SK-N-SH (cell line): ENCODE measurements at regions of chr2 and their contacts with region 1.

Region 1: DNA sequence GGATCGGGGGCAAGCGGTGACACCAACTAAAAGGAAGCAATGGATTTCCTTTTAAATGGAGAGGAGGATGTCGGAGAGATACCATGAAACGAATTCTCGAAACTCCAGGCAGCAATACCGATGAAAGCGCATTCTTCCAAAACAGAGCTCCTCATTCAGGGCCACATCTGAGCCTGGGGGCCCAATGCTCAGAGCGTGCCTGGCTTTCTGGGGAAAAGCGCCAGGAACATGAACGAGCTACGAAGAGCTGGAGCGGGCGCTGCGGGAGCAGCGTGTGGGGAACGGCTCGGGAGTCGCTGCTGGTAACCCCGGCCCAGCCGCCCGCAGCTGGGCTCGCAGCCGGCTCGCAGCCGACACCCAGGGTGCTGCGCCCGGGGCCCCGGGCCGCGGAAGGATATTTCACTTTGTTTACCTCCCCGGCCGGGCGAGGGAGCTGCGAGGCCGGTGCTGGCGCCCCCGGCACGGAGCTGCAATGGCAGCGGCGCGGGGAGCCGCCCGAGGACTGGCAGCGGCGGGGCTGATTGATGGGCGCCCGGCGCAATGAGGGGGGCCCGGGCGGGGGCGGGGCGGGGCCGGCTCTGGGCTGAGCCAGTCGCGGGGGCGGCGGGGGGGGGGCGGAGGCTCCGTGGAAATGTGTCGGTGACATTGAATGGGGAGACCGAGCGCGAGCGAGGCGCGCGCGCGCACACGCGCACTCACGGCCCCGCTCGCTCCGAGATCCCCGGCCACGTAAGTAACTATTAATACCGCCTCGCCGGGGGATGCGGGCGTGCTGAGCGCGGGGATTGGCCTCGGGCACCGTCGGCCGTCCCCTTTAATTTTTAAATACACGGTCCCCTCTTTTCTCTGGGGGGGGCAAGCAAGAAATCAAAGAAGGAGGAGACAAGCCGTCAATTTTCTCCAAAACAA is at the start of gene TRIB2:
- DNase-seq: peak; percentile 98
- H3K4me3 ChIP-seq: peak within 1 kb of the TSS; percentile 93 to 98
- H3K27ac ChIP-seq: peak within 1 kb of the TSS; percentile 92 to 93
- H3K4me1 ChIP-seq: peaks cover 28 to 34% of the 10 kb centered on the region in 2 experiments
- H3K27me3 ChIP-seq: no peaks in the 10 kb centered on the region
- CTCF ChIP-seq: 0 out of 2 replicates have a peak, but pooled peaks have one; percentile 19
- EP300 ChIP-seq: no peak; a peak in 2 of 4 replicates
- RAD21 ChIP-seq: peak; percentile 53
- polyA plus RNA-seq, gene TRIB2: 21.0 and 27.5 TPM in 2 replicates

Region 2: DNA sequence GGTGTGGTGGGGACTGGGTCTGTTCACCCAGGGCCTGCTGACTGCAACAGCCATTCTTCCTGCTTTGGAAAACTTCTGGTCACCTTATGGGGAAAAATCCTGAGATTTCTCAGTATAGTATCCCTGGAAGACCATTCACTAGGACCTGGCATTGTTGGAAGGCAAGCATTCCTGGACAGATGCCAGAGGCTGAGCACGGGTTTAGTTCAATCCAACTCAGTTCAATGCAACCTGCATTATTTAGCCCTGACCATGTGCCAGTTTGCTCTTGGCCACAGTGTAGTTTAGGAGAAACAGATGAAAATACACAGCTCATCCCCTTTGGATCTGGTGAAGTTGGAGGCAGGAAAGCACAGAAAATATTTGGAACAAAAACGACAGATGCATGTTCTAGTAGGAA is 874.2 kb before region 1 on chr2:
- CTCF ChIA-PET with region 1: interaction called, 15 read pairs
- POLR2A ChIA-PET with region 1: interaction called, 4 read pairs
- DNase-seq: no peak
- H3K4me3 ChIP-seq: no peak overlapping the region
- H3K27ac ChIP-seq: no peak overlapping the region
- H3K4me1 ChIP-seq: peaks cover 0 to 3% of the 10 kb centered on the region in 2 experiments; a peak in 1 of 4 replicates
- H3K27me3 ChIP-seq: no peaks in the 10 kb centered on the region
- CTCF ChIP-seq: no peak
- EP300 ChIP-seq: no peak
- RAD21 ChIP-seq: no peak

Region 3: DNA sequence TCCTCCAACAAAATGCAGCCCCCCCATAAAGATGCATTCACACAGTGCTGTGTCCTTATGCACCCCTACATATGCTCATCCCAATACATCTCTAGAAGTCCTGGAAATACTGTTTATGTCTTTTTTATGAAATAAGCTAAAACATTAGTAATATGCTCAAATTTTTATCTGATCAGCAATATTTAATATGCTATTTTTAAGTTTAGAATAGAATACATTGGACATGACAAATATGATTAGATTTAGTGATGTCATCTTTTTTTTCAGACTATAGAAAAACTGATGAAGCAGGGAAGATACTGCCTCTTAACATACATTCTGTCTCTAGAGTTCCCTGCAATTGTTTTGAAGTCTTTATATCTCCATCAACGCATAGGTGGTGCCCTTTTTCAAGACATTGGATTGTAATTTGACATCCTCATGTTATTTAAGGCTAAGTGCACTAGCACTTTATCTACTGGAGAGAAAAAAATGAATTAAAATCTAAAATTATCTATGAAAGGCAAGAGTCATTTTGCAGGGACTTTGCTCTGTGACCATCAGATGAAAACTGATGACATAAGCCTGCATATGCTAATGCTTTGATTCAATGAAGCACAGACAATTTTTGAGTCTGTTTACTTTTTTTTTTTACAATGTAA is 574.8 kb before region 1 on chr2:
- CTCF ChIA-PET with region 1: interaction called, 17 read pairs
- POLR2A ChIA-PET with region 1: no interaction called
- DNase-seq: peak; percentile 44
- H3K4me3 ChIP-seq: no peak overlapping the region
- H3K27ac ChIP-seq: no peak overlapping the region
- H3K4me1 ChIP-seq: peaks cover 0 to 9% of the 10 kb centered on the region in 2 experiments; a peak in 3 of 4 replicates
- H3K27me3 ChIP-seq: no peaks in the 10 kb centered on the region
- CTCF ChIP-seq: peak; percentile 33
- EP300 ChIP-seq: no peak
- RAD21 ChIP-seq: peak; percentile 65

Region 4: GRCh38 chr2:12606472-12607000 is 110.0 kb before region 1 on chr2:
- CTCF ChIA-PET with region 1: interaction called, 17 read pairs
- POLR2A ChIA-PET with region 1: no interaction called
- DNase-seq: peak; percentile 70
- H3K4me3 ChIP-seq: peak overlapping the region in 1 of 2 experiments; percentile 5; a peak in 1 of 4 replicates
- H3K27ac ChIP-seq: peak overlapping the region; percentile 84 to 94
- H3K4me1 ChIP-seq: peaks cover 23 to 47% of the 10 kb centered on the region in 2 experiments
- H3K27me3 ChIP-seq: no peaks in the 10 kb centered on the region
- CTCF ChIP-seq: peak; percentile 46
- EP300 ChIP-seq: peak in 1 of 2 experiments; percentile 52; a peak in 1 of 4 replicates
- RAD21 ChIP-seq: peak; percentile 38

Region 5: GRCh38 chr2:12733846-12734245 is 17.3 kb after region 1 on chr2:
- CTCF ChIA-PET with region 1: interaction called, 11 read pairs
- POLR2A ChIA-PET with region 1: interaction called, 6 read pairs
- DNase-seq: no peak
- H3K4me3 ChIP-seq: no peak overlapping the region
- H3K27ac ChIP-seq: no peak overlapping the region
- H3K4me1 ChIP-seq: peaks cover 0 to 3% of the 10 kb centered on the region in 2 experiments; a peak in 1 of 4 replicates
- H3K27me3 ChIP-seq: no peaks in the 10 kb centered on the region
- CTCF ChIP-seq: no peak
- EP300 ChIP-seq: no peak
- RAD21 ChIP-seq: no peak

Region 6: DNA sequence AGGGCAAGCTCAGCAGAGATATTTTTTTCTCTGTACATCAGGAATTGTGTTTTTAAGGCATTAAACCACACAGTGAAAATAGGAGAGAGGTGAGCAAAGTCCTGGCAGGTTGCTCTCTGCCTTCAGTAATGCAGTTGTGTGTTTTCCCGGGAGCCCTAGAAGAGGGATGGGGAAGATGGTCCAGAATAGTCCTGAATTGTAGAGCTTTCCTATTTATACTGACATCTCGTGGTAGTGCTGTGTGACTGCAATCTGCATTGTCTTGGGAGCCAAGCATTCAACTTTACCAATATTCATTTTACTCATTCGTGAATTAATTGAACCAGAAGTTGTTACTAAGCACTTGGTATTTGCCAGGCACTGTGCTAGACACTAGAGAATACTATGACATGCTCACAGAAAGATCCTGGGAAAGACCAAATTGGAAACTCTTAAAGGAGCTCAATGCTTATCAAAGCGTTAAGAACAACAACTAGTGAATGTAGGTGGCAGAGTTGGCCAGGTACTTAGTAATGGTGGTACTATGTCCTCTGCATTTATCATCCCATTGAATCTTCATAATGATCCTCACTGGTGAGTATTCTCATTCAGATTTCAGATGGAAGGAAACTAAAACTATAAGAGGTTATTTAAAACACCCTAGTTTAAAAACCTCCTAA is 214.8 kb after region 1 on chr2:
- CTCF ChIA-PET with region 1: interaction called, 85 read pairs
- POLR2A ChIA-PET with region 1: interaction called, 22 read pairs
- DNase-seq: peak; percentile 75
- H3K4me3 ChIP-seq: no peak overlapping the region
- H3K27ac ChIP-seq: peak overlapping the region in 1 of 2 experiments; percentile 86; a peak in 2 of 4 replicates
- H3K4me1 ChIP-seq: peaks cover 26 to 35% of the 10 kb centered on the region in 2 experiments; a peak in 3 of 4 replicates
- H3K27me3 ChIP-seq: no peaks in the 10 kb centered on the region
- CTCF ChIP-seq: peak; percentile 99
- EP300 ChIP-seq: no peak
- RAD21 ChIP-seq: peak; percentile 89

Region 7: GRCh38 chr2:13000664-13001363 is 284.3 kb after region 1 on chr2:
- CTCF ChIA-PET with region 1: interaction called, 152 read pairs
- POLR2A ChIA-PET with region 1: interaction called, 3 read pairs
- DNase-seq: no peak
- H3K4me3 ChIP-seq: no peak overlapping the region
- H3K27ac ChIP-seq: no peak overlapping the region
- H3K4me1 ChIP-seq: peaks cover 16 to 31% of the 10 kb centered on the region in 2 experiments
- H3K27me3 ChIP-seq: no peaks in the 10 kb centered on the region
- CTCF ChIP-seq: no peak
- EP300 ChIP-seq: no peak
- RAD21 ChIP-seq: no peak